ENCODE measurements at regions of chr13 and their contacts with region 1.

Region 1: DNA sequence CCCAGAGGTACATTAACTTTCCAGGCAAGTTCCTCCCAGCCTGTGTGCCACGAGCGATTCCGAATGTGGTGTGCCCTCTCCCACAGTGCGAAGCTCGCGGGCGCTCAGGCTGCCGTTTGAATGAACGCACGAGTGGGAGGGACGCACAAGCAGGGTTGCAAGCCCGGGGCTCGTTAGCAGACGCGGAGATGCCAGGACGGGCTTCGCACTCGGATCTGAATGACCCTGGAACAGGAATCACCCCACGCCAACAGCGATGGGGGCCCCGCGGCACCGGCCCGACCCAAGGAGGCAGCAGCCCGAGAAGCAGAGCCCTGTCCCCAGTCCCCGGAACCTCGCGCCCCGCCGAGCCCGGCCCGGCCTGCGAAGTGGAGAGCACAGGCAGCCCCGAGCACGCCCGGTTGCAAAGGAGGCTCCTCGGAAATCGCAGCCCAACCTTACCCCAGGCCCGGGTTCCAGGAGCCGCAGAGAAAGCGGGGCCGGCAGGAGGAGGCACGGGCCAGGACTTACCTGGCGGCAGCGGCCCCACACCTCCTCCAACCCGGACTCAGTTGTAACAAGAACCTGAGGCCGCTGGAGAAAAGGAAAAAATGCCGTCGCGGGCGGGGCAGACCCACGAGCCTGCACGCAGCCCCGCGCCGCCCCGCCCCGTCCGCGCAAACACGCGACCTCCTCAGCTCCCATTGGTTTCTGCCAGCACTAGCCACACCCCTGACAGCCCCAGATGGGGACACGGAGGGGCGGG is at the start of gene SLC25A30:
- DNase-seq: peak; percentile 80 to 96 (median 90)
- ATAC-seq: peak; percentile 89
- H3K4me3 ChIP-seq: peak within 1 kb of the TSS; percentile 90
- H3K4me3 Mint-ChIP-seq: peak within 1 kb of the TSS; percentile 97
- H3K27ac ChIP-seq: peak within 1 kb of the TSS; percentile 68 to 82
- H3K27ac Mint-ChIP-seq: peak within 1 kb of the TSS; percentile 94
- H3K4me1 ChIP-seq: peaks cover 34% of the 10 kb centered on the region
- H3K4me1 Mint-ChIP-seq: peaks cover 30% of the 10 kb centered on the region
- H3K27me3 ChIP-seq: no peaks in the 10 kb centered on the region
- H3K27me3 Mint-ChIP-seq: no peaks in the 10 kb centered on the region
- CTCF ChIP-seq: no peak
- total RNA-seq, gene SLC25A30: 23.2 to 28.6 TPM

Region 2: GRCh38 chr13:45231722-45232121 is 186.2 kb before region 1 on chr13:
- CTCF ChIA-PET with region 1: no interaction called
- POLR2A ChIA-PET with region 1: no interaction called
- intact Hi-C with region 1: no loop called
- DNase-seq: no peak
- ATAC-seq: no peak
- H3K4me3 ChIP-seq: no peak overlapping the region
- H3K4me3 Mint-ChIP-seq: no peak overlapping the region
- H3K27ac ChIP-seq: no peak overlapping the region
- H3K27ac Mint-ChIP-seq: no peak overlapping the region
- H3K4me1 ChIP-seq: no peaks in the 10 kb centered on the region
- H3K4me1 Mint-ChIP-seq: peaks cover 7% of the 10 kb centered on the region
- H3K27me3 ChIP-seq: no peaks in the 10 kb centered on the region
- H3K27me3 Mint-ChIP-seq: no peaks in the 10 kb centered on the region
- CTCF ChIP-seq: no peak

Region 3: DNA sequence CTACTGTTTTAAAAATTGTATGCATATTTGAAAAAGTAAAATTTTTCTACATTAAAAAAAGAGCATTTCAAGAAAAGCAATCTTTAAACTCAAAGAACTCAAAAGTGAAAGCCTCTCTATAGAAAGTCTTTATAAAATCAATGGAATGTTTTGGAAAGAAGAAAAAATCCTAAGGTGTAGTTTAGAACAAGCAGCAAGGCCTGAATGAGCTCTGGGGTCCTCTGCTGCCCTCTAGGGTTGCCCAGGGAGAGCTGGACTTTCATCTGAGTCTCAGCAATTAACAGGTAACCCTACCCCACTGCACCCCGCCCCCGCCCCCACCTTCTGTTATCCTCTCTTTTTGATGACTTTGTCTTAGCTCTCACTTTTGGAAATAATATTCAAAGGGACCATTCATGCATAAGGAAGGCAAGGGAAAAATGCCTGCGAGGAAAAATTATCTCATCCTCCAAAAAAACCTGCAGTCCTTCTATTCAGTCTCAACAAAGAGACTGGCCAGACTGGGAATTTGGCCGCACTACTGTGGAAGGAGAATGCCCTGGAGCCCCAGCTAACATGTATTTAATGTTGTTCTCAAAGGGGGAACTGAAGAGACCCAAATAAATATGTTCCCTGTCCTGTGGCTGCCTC is 23.9 kb before region 1 on chr13:
- CTCF ChIA-PET with region 1: interaction called, 3 read pairs
- POLR2A ChIA-PET with region 1: interaction called, 100 read pairs
- intact Hi-C with region 1: no loop called
- DNase-seq: peak in 8 of 14 experiments; percentile 13 to 71 (median 43)
- ATAC-seq: no peak
- H3K4me3 ChIP-seq: no peak overlapping the region
- H3K4me3 Mint-ChIP-seq: no peak overlapping the region
- H3K27ac ChIP-seq: no peak overlapping the region
- H3K27ac Mint-ChIP-seq: peak overlapping the region; percentile 86
- H3K4me1 ChIP-seq: peaks cover 32% of the 10 kb centered on the region
- H3K4me1 Mint-ChIP-seq: peaks cover 48% of the 10 kb centered on the region
- H3K27me3 ChIP-seq: no peaks in the 10 kb centered on the region
- H3K27me3 Mint-ChIP-seq: no peaks in the 10 kb centered on the region
- CTCF ChIP-seq: peak; percentile 70

Region 4: GRCh38 chr13:45464687-45465453 is 46.9 kb after region 1 on chr13 and contains the start of gene COG3:
- CTCF ChIA-PET with region 1: interaction called, 8 read pairs
- POLR2A ChIA-PET with region 1: interaction called, 59 read pairs
- intact Hi-C with region 1: loop called (anchors 1 to 2 kb)
- DNase-seq: peak; percentile 88 to 98 (median 93)
- ATAC-seq: peak; percentile 93
- H3K4me3 ChIP-seq: peak within 1 kb of the TSS; percentile 94
- H3K4me3 Mint-ChIP-seq: peak within 1 kb of the TSS; percentile 84
- H3K27ac ChIP-seq: peak within 1 kb of the TSS; percentile 78 to 97
- H3K27ac Mint-ChIP-seq: peak within 1 kb of the TSS; percentile 85
- H3K4me1 ChIP-seq: peaks cover 30% of the 10 kb centered on the region
- H3K4me1 Mint-ChIP-seq: peaks cover 60% of the 10 kb centered on the region
- H3K27me3 ChIP-seq: no peaks in the 10 kb centered on the region
- H3K27me3 Mint-ChIP-seq: no peaks in the 10 kb centered on the region
- CTCF ChIP-seq: peak; percentile 50
- total RNA-seq, gene COG3: 52.8 to 57.0 TPM